ENCODE measurements at regions of chr1 and their contacts with region 1.

Region 1: GRCh38 chr1:25579292-25580252 is 36.2 kb downstream of the LDLRAP1 start:
- DNase-seq: no peak
- H3K4me3 ChIP-seq: no peak overlapping the region
- H3K27ac ChIP-seq: no peak overlapping the region
- H3K4me1 ChIP-seq: no peaks in the 10 kb centered on the region
- H3K27me3 ChIP-seq: no peaks in the 10 kb centered on the region
- CTCF ChIP-seq: no peak

Region 2: GRCh38 chr1:25624156-25624555 is 44.6 kb after region 1 on chr1:
- CTCF ChIA-PET with region 1: no interaction called
- dilution Hi-C with region 1: loop called (anchors 5 kb)
- in situ Hi-C with region 1: no loop called
- intact Hi-C with region 1: no loop called
- DNase-seq: no peak
- H3K4me3 ChIP-seq: no peak overlapping the region
- H3K27ac ChIP-seq: no peak overlapping the region
- H3K4me1 ChIP-seq: no peaks in the 10 kb centered on the region
- H3K27me3 ChIP-seq: peaks cover 14% of the 10 kb centered on the region
- CTCF ChIP-seq: no peak